GM10248 (cell line): ENCODE measurements at regions of chr7 and their contacts with region 1.

Region 1: GRCh38 chr7:102272075-102272917 is 14.4 kb upstream of the SH2B2 start:
- DNase-seq: peak; percentile 86
- CTCF ChIP-seq: peak; percentile 91

Region 2: GRCh38 chr7:101542527-101543241 is 729.6 kb before region 1 on chr7:
- CTCF ChIA-PET with region 1: interaction called, 72 read pairs
- POLR2A ChIA-PET with region 1: no interaction called
- DNase-seq: peak; percentile 76
- CTCF ChIP-seq: peak; percentile 82

Region 3: DNA sequence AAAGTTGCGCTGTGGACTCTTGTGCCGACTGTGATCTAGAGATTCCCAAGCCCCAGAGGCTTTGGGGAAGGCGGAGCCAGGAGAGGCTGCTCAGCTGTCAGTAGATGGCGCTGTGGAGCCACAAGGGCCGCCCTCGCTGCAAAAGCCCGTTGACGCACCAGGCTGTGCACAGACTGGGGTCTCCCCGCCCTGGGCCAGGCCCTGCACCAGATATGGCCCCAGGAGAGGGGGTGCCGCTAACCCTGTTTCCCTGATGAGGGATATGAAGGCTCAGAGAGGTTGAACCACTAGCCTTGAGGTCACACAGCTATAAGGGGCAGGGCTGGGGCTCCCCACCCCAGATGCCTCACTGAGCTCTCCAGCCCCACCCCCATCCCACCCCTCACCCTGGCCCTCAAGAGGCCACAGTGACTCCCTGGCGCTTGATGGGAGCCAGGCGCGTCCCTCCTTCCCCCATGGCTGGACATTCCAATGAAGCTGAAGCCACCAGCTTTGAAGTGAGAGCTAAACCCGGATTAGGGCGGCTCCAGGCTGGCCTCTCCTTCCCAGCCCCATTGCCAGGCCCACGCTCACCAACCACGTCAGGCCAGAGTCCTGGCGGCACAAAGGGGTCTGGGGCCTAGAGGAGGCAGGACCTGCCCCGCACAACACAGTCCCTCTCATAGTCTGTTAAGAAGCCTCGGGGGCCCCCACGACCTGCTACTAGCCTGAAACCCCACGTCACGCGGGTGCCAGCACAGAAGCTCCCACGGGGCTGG is 669.6 kb before region 1 on chr7:
- CTCF ChIA-PET with region 1: interaction called, 24 read pairs
- POLR2A ChIA-PET with region 1: no interaction called
- DNase-seq: peak; percentile 83
- CTCF ChIP-seq: peak; percentile 92

Region 4: DNA sequence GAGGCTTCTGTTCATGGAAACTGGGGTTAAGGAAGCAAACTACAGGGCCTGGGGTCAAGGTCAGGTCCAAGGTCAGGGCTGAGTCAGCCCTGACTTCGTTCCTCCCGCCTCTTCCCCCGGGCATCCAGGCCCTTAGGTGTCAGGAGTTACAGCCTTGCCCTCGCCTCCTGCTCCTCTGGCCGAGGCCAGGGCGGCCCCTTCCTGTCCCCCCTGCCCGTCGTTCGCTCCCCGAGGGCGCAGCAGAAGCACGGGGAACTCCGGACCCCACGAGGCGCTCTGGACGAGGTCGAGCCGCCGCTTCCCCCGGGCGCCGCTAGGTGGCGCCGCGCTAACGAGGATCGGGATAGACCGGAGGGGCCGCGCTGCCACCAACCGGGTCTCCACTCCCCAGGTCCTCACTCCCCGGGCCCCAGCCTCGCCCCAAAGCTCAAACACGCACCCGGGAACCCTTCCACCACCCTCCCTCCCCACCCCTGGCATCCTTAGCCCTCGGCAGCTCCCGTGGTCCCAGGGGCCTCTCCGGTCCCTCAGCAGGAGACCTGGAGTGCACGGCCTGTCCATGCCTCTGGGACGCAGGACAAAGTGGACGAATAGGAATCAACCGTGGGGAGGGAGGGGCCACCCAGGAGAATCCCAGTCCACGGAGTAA is 584.0 kb before region 1 on chr7:
- CTCF ChIA-PET with region 1: interaction called, 11 read pairs
- POLR2A ChIA-PET with region 1: no interaction called
- DNase-seq: peak; percentile 92
- CTCF ChIP-seq: peak; percentile 91

Region 5: DNA sequence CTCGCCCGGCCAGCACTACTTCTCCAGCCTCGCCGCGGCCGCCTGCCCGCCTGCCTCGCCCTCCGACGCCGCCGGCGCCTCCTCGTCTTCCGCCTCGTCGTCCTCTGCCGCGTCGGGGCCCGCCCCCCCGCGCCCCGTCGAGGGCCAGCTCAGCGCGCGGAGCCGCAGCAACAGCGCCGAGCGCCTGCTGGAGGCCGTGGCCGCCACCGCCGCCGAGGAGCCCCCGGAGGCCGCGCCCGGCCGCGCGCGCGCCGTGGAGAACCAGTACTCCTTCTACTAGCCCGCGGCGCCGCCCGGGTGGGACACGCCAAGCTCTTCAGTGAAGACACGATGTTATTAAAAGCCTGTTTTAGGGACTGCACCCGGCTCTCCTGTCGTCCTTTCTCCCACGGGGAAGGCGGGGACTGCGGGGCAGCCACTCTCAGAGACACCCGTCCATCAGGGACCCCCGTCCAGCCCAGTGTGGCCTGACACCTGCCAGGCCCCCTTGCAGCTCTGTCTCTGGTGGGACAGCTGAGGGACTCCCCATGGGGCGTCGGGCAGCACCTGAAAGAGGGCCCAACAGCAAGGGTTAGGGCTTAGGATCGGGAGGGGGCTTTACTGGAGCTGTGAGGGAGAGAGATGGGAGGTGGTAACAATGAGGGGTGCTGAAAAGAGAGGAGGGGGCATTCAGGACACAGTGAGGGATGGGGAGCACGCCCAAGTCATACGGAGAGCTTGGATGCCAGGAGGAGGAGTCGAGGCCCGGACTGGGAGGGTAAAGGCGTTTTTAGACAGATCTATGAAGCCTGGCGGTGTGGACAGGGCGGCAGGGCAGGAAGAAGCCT is 49.3 kb after region 1 on chr7:
- CTCF ChIA-PET with region 1: no interaction called
- POLR2A ChIA-PET with region 1: no interaction called
- DNase-seq: peak; percentile 48
- CTCF ChIP-seq: no peak